ENCODE measurements at regions of chr19 and their contacts with region 1.

Region 1: GRCh38 chr19:2578901-2579677 is 103.2 kb downstream of the GADD45B start:
- DNase-seq: peak; percentile 21 to 67 (median 47)
- ATAC-seq: peak; percentile 65
- H3K4me3 ChIP-seq: peak overlapping the region; percentile 33
- H3K4me3 Mint-ChIP-seq: peak overlapping the region in 6 of 10 donors; percentile 51 to 69 (median 62)
- H3K27ac ChIP-seq: no peak overlapping the region
- H3K27ac Mint-ChIP-seq: no peak overlapping the region
- H3K4me1 ChIP-seq: peaks cover 7 to 10% of the 10 kb centered on the region in 2 donors
- H3K4me1 Mint-ChIP-seq: peaks cover 0 to 11% (median 4%) of the 10 kb centered on the region in 7 donors
- H3K27me3 ChIP-seq: no peaks in the 10 kb centered on the region
- H3K27me3 Mint-ChIP-seq: peaks cover 0 to 24% (median 0%) of the 10 kb centered on the region in 5 donors

Region 2: DNA sequence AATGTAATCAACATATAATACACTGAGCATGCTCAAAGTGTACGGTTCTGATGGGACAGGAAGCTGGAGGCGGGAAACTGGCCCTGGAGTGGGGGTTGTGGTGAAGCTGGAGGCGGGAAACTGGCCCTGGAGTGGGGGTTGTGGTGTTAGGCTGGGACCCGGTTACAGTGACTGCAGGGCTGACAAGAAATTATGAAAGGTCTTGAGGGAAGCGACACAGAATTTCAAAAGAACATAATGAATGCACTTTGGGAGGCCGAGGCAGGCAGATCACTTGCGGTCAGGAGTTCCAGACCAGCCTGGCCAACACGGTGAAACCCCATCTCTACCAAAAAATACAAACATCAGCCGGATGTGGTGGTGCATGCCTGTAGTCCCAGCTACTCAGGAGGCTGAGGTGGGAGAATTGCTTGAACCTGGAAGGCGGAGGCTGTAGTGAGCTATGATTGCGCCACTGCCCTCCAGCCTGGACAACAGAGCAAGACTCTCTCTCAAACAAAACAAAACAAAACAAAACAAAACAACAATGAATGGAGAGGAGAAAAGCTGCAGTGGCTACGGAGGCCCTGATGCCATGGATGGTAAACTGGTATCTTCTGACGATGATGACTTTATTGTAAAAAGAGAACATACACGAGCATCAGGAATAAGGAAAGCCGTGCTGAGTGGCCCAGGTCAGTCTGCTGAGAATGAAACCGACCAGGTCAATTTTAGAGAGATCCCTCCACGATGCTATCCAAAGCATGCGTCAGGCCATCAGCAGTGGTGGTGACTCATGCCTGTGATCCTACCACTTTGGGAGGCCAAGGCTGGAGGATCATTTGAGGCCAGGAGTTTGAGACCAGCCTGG is 41.3 kb before region 1 on chr19:
- CTCF ChIA-PET with region 1: no interaction called
- POLR2A ChIA-PET with region 1: no interaction called
- intact Hi-C with region 1: no loop called
- DNase-seq: no peak
- ATAC-seq: no peak
- H3K4me3 ChIP-seq: no peak overlapping the region
- H3K4me3 Mint-ChIP-seq: no peak overlapping the region
- H3K27ac ChIP-seq: no peak overlapping the region
- H3K27ac Mint-ChIP-seq: peak overlapping the region in 2 of 9 donors; percentile 6 to 28
- H3K4me1 ChIP-seq: peaks cover 3 to 8% of the 10 kb centered on the region in 2 donors
- H3K4me1 Mint-ChIP-seq: peaks cover 16 to 40% (median 25%) of the 10 kb centered on the region in 7 donors
- H3K27me3 ChIP-seq: no peaks in the 10 kb centered on the region
- H3K27me3 Mint-ChIP-seq: no peaks in the 10 kb centered on the region

Region 3: DNA sequence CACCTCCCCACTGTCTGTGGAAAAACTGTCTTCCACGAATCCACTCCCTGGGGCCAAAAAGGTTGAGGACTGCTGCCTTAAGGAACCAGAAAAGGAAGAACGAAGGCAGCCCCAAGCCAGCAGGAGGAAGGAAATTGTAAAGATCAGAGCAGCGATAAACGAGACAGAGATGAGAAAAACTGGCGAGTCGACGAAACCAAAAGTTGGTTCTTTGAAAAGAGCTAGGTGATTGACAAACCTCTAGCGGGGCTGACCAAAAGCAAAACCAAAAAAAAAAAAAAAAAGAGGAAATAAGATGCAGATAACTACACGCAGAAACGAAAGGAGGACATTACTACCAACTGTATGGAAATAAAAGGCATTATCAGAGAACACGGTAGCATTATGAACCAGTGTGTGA is 26.2 kb before region 1 on chr19:
- CTCF ChIA-PET with region 1: no interaction called
- POLR2A ChIA-PET with region 1: no interaction called
- intact Hi-C with region 1: loop called in 1 of 2 experiments (anchors 1 kb)
- DNase-seq: peak in 8 of 9 donors; percentile 48 to 77 (median 66)
- ATAC-seq: peak; percentile 82
- H3K4me3 ChIP-seq: peak overlapping the region; percentile 8
- H3K4me3 Mint-ChIP-seq: peak overlapping the region; percentile 67 to 93 (median 83)
- H3K27ac ChIP-seq: peak overlapping the region; percentile 59
- H3K27ac Mint-ChIP-seq: peak overlapping the region; percentile 48 to 86 (median 81)
- H3K4me1 ChIP-seq: peaks cover 10 to 12% of the 10 kb centered on the region in 2 donors
- H3K4me1 Mint-ChIP-seq: peaks cover 15 to 34% (median 20%) of the 10 kb centered on the region in 7 donors
- H3K27me3 ChIP-seq: no peaks in the 10 kb centered on the region
- H3K27me3 Mint-ChIP-seq: no peaks in the 10 kb centered on the region

Region 4: GRCh38 chr19:2636897-2637683 is 58.0 kb after region 1 on chr19:
- CTCF ChIA-PET with region 1: interaction called, 5 read pairs
- POLR2A ChIA-PET with region 1: no interaction called
- intact Hi-C with region 1: loop called in 1 of 2 experiments (anchors 1 kb)
- DNase-seq: peak; percentile 64 to 84 (median 74)
- ATAC-seq: peak; percentile 97
- H3K4me3 ChIP-seq: no peak overlapping the region
- H3K4me3 Mint-ChIP-seq: peak overlapping the region in 5 of 10 donors; percentile 23 to 37 (median 23)
- H3K27ac ChIP-seq: no peak overlapping the region
- H3K27ac Mint-ChIP-seq: peak overlapping the region in 1 of 9 donors; percentile 70
- H3K4me1 ChIP-seq: peaks cover 0 to 10% of the 10 kb centered on the region in 2 donors
- H3K4me1 Mint-ChIP-seq: peaks cover 5 to 18% (median 13%) of the 10 kb centered on the region in 7 donors
- H3K27me3 ChIP-seq: no peaks in the 10 kb centered on the region
- H3K27me3 Mint-ChIP-seq: peaks cover 0 to 11% (median 0%) of the 10 kb centered on the region in 5 donors